ENCODE measurements at regions of chr6 and their contacts with region 1.

Region 1: DNA sequence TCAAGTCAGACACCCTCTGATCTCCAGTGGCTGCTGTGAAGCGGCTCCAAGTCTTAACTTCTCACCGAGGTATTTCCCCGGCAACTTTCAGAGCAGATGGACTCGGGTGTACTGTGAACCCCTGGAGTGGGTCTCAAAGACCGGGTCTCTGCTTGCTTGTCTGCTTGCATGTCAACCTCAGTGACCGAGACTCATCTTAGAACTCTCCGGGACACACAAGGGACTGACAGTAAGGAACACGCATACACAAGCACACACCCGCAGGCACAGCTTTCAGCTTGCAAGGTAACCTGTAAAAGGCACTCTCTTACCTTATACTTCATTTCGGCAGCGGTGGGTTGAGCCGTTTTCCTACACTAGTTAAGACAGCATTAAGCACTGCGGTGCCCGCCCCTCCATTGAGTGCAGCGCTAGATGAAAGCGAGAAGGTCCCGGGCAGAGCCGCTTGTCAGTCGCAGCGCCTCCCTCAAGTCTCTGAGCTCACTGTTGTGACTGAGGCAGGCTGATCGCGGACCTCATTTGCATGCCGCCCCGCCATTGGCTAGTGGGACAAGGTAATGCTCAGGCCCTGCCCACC is at the start of gene NEDD9:
- DNase-seq: peak; percentile 95 to 99
- H3K4me3 ChIP-seq: peak within 1 kb of the TSS; percentile 77 to 98
- H3K27ac ChIP-seq: peak within 1 kb of the TSS; percentile 91 to 95
- H3K4me1 ChIP-seq: peaks cover 10 to 16% of the 10 kb centered on the region in 2 donors
- H3K27me3 ChIP-seq: no peaks in the 10 kb centered on the region
- CTCF ChIP-seq: no peak
- total RNA-seq, gene NEDD9: 150 TPM

Region 2: GRCh38 chr6:11083491-11083890 is 148.8 kb before region 1 on chr6:
- intact Hi-C with region 1: no loop called
- DNase-seq: no peak
- H3K4me3 ChIP-seq: no peak overlapping the region
- H3K27ac ChIP-seq: no peak overlapping the region
- H3K4me1 ChIP-seq: no peaks in the 10 kb centered on the region
- H3K27me3 ChIP-seq: no peaks in the 10 kb centered on the region
- CTCF ChIP-seq: no peak

Region 3: GRCh38 chr6:11144393-11144851 is 87.9 kb before region 1 on chr6:
- intact Hi-C with region 1: loop called (anchors 5 kb)
- DNase-seq: peak; percentile 16 to 87
- H3K4me3 ChIP-seq: no peak overlapping the region
- H3K27ac ChIP-seq: no peak overlapping the region
- H3K4me1 ChIP-seq: no peaks in the 10 kb centered on the region
- H3K27me3 ChIP-seq: no peaks in the 10 kb centered on the region
- CTCF ChIP-seq: peak; percentile 90 to 94 (median 92)

Region 4: DNA sequence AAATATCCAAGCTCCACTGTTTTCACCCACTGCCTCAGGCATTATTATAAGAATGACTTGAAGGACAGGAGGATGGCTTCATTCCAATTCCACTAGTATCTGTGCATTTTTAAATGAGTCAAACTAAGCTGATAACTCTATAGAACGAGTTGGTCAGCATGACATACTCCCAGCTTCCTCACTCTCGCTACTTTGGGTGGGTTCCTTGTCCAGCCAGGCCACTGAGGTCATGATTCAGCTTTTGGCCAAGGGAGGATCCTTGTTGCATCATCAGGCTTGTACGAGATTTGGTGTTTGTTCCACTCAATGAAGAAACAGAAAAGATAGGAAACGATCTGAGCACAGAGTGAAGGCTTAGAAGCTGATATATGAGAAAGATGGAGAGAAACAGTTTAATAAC is 19.7 kb before region 1 on chr6:
- intact Hi-C with region 1: loop called (anchors 2 kb)
- DNase-seq: peak in 1 of 2 donors; percentile 87
- H3K4me3 ChIP-seq: peak overlapping the region; percentile 0 to 32
- H3K27ac ChIP-seq: peak overlapping the region; percentile 91 to 94
- H3K4me1 ChIP-seq: peaks cover 43 to 90% of the 10 kb centered on the region in 2 donors
- H3K27me3 ChIP-seq: no peaks in the 10 kb centered on the region
- CTCF ChIP-seq: no peak

Region 5: DNA sequence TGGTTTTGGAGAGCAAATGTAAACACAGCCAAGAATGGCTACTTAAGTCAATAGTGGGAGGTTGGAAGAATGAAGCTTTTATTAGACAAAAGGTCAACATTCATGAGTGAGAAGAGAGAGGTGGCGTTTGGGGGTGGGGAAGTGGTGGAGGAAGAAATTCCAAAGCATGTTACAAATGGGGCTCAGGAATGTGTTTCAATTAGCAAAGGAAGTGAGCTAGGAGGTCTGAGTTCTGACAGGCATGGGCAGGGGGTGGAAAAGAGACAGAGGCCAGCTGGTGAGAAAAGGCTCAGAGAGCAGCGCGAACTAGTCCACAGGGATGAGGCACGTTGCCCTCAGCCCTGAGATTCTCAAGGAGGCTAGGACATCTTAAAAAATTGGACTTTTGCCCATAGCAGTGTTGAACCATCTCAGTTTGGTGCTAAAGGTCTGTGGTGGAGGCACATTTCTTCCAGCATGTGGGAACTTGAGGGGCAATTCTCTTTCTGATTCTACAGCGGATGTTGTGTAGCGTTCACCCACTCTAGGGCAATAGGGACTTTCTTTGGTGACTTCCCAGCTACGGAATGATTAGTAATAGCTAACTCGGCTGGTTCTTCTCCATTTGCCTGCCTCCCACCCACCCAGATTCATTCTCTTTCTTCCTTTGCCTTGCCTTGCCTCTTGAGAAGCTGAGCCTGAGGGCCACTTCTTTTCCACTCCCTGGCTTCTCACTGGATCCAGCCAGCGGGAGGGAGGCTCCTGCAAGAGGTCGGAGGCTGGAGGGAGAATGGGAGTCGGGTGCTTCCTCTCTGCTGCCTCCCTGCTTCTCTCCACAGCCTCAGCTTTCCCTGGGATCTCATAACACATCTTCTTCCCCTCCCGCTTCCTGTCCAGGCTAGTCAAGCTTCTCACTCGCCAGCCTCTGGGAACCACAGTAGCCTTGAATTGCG is 45.3 kb after region 1 on chr6:
- intact Hi-C with region 1: loop called (anchors 5 kb)
- DNase-seq: no peak
- H3K4me3 ChIP-seq: no peak overlapping the region
- H3K27ac ChIP-seq: peak overlapping the region; percentile 63 to 67
- H3K4me1 ChIP-seq: peaks cover 3 to 17% of the 10 kb centered on the region in 2 donors
- H3K27me3 ChIP-seq: no peaks in the 10 kb centered on the region
- CTCF ChIP-seq: no peak

Region 6: DNA sequence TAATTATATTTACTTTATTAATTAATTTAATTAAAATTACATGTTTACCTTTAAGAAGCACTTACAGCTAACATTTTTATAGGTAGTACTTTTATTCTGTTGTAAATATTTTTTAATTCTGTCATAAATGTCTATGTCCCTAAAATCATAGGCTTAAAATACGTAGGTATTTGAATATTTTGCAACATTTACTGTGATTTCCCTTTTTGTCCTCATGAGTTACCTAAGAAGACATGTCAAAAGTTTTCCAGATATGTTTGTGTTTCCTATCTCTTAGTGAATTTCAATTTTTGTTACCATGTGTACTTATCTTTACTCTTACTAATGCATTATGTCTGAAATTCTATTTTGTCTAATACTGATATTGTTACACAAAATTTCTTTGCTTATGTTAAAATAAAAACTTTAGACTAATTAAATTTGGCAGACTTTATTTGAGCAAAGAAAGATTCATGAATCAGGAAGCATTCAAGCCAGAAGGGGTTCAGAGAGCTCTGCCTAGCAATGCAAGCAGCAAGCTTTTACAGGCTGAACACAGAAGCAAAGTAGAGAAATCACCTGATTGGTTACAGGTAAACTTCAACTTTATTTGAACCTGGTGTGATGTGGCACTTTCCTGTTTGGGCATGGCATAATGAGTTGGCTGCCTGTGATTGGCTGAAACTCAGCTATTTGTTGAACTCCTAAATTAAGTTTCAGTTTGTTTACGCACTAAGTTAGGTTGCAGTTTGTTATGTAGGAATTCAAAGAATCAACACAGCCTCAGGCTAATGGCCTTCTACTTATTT is 182.1 kb after region 1 on chr6:
- intact Hi-C with region 1: loop called (anchors 5 kb)
- DNase-seq: no peak
- H3K4me3 ChIP-seq: no peak overlapping the region
- H3K27ac ChIP-seq: peak overlapping the region; percentile 85 to 93
- H3K4me1 ChIP-seq: peaks cover 7 to 20% of the 10 kb centered on the region in 2 donors
- H3K27me3 ChIP-seq: no peaks in the 10 kb centered on the region
- CTCF ChIP-seq: no peak

Region 7: GRCh38 chr6:11496152-11497060 is 264.1 kb after region 1 on chr6:
- intact Hi-C with region 1: loop called (anchors 2 kb)
- DNase-seq: peak in 1 of 2 donors; percentile 80
- H3K4me3 ChIP-seq: peak overlapping the region in 1 of 2 donors; percentile 17
- H3K27ac ChIP-seq: peak overlapping the region; percentile 14 to 33
- H3K4me1 ChIP-seq: peaks cover 0 to 8% of the 10 kb centered on the region in 2 donors
- H3K27me3 ChIP-seq: no peaks in the 10 kb centered on the region
- CTCF ChIP-seq: peak; percentile 83 to 93 (median 91)

Measured in ascending aorta (tissue), 2 donors.